ENCODE measurements at regions of chr3 and their contacts with region 1.

Region 1: DNA sequence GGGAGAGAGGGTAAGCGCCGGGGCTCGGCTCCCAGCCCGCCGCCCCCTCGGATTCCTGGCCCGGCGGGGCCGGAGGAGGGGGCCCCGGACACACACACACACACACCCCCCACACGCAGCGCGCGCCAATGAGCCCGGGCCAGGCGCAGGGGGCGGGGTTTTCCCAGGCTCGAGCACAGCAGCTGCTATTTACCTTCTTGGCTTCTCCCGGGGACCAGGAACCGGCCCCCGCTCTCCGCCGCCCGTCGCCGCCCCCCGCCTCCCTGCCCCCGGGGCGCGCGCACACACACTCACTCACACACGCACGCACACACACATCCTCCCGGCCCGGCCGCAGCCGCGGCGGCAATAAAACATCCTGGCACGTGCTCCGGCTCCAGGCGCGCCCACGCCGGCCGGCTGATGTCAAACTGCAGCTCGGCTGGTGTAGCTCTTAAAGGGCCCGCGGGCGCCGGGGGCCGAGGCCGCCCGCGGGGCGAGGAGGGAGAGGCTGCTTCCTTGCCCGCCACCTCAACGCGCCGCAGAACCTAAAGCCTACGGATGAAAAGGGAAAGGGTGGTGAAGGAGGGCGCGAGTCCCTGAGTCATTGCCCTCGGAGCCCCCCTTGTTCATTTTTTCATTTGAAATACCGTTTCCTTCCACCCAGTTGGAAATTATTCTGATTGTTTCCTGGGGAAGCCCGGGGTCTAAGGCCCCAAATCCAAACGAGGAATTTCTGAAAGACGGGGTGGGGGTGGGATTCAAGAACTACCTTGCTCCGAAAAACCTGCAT is 1.0 kb upstream of the HES1 start:
- DNase-seq: peak; percentile 56 to 95 (median 72)

Region 2: DNA sequence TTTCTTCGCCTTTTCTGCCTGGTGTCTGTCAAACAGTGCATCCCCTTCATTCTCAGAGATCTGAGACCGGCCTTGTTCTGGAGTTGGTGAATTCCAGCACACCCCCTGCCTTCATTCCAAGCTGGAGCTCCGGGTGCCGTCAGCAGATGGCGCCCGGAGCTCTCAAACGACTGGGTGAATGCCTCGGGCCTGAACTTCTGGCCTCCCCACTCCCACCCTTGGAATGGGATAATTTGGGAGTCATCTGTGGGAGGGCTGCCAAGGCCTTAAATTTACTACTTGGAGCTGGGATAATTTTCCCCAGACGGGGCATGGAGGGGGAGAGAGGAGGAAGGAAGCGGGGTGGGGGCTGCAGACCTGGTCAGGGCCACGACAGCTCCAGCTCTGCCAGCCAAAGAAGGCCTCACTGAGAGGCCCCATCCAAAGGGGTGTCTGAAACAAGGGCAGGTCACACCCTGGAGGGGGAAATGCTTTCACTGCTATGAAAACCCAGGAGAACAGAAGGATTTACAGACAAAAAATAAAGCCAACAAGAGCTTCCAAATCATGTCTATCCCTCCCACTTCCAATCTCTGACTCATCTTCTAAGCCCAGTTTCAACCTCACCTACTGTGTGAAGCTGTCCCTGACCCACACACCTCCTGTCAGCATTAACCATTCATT is 354.0 kb before region 1 on chr3:
- intact Hi-C with region 1: loop called (anchors 2 kb)
- DNase-seq: peak in 9 of 10 donors; percentile 27 to 91 (median 58)

Region 3: DNA sequence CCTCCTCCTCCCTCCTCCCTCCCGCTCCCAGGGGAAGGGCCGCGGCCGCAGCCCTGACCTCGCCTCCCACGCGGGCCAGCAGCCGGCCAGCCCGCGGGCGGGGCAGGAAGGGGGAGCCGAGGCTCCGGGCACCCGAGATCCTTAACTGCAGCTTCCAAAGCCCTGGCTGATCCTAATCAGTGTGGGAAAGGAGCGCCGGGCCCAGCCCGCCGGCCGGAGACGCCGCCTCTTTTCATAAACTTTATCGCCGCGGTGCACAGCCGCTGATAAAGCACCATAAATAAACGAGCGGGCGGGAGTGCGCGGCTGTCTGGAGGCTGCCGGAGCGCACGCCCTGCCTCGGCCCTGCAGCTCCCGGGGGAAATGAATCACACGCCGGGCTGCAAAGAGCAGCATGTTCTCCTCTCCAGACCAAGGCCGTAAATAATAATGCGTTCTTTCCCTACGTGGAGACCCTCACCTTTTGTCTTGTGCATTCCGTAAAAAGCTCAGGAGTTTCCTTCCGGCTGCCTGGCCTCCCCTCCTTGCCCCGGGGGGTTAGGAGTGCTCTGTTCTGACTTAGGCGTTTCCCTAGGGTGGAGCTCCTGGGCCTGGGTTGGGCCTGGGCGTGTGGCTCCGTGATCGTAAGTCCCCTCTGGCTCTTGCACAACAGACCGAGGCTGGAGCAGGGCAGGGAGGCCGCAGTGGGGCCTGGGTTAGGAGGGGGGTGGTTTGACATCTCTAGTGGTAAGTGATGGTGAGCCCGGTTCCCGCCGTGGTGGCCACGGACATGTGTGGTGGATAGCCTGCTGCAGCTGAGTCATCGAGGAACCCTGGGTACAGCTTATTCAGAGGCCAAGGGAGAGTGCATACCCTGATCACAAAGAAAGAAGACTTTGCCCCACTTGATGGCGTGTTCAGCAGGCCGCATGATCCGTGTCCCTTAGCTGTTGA is 131.6 kb before region 1 on chr3:
- intact Hi-C with region 1: loop called (anchors 10 kb)
- DNase-seq: peak in 6 of 10 donors; percentile 25 to 90 (median 58)

Region 4: GRCh38 chr3:194194051-194194756 is 59.3 kb after region 1 on chr3:
- intact Hi-C with region 1: no loop called
- DNase-seq: no peak

Measured in posterior cingulate gyrus (tissue), 11 donors.